Common myeloid progenitor, CD34-positive (primary cell): ENCODE measurements at regions of chr1 and their contacts with region 1.

Region 1: DNA sequence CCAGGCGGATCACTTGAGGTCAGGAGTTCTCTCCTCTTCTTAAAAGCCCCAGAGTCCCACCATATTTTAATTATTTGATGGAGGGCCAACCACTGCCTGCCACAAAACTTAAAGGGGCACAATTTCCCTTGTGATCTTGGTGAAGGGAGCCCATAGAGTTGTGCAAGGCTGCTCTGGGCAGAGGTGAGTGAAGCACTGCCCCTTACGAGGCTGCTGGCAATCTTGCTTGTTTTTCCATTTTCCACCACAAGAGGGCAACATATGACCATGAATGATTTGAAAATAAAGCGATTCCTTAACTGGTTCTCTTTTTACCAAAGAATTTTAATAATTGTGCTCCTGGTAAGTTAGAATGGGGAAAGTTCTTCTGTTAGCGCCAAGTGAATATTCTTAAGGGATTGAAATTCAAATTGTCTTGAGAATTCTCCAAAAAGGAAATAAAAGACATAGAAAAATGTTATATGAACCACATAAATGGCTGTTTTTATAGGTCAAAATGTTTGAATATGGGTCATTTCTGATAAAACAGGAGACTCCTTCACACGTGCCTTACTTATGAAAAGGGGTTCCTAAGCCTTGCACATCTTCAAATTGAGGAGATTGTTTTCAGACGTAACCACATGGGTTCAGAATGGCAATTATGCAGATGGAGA is 22.7 kb downstream of the PGM1 start:
- DNase-seq: peak; percentile 71 to 85 (median 77)
- H3K4me3 ChIP-seq: no peak overlapping the region
- H3K27ac ChIP-seq: no peak overlapping the region
- H3K4me1 ChIP-seq: peaks cover 0 to 8% (median 2%) of the 10 kb centered on the region in 4 experiments
- H3K27me3 ChIP-seq: no peaks in the 10 kb centered on the region

Region 2: DNA sequence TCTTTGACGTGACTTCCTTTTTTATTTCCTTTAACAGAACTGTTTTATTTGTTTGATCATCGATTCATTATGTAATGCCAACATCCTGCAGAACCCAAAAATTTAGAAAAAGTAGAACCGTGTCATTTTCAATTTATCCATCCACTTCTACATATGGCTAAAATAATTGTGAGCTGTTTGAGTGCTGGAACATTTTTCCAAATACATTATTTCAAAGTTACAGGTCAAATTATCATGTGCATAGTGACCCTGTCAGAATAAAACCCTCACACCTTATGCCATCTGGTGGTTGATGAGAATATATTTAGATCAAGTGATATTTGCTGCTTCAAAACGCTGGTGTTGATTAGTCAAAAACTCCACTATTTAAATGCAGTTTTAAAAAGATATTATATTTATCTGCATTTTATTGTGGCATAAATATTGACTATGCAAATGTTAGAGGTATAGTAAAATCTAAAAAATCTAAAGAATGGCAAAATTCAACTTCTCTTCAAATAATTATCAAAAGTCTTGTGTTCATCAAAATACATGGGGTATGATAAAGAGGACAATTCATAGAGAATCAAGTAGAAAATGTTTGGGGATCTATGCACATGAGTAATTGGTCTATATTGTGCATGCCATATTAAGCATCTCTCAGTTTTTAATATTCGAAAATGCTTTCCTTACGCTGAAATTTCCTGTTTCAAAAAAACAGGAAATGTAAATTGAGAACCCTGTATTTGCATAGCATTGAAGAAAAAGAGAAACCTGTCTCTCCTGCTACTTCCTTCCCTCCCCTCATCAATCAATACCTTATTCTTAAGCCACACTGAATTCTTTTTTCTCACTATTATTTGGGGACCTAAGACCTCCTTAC is 627.2 kb after region 1 on chr1:
- CTCF ChIA-PET with region 1: interaction called, 22 read pairs
- POLR2A ChIA-PET with region 1: interaction called, 4 read pairs
- DNase-seq: peak; percentile 40 to 61 (median 60)
- H3K4me3 ChIP-seq: peak overlapping the region in 1 of 7 experiments; percentile 13
- H3K27ac ChIP-seq: no peak overlapping the region
- H3K4me1 ChIP-seq: peaks cover 0 to 13% (median 9%) of the 10 kb centered on the region in 4 experiments
- H3K27me3 ChIP-seq: no peaks in the 10 kb centered on the region